ENCODE measurements at regions of chr15 and their contacts with region 1.

Region 1: GRCh38 chr15:101201406-101202174 is 50.3 kb downstream of the CHSY1 start:
- DNase-seq: peak; percentile 73
- H3K4me3 Mint-ChIP-seq: peak overlapping the region; percentile 67
- H3K27ac Mint-ChIP-seq: peak overlapping the region; percentile 96
- H3K4me1 Mint-ChIP-seq: peaks cover 82% of the 10 kb centered on the region
- H3K27me3 Mint-ChIP-seq: no peaks in the 10 kb centered on the region

Region 2: GRCh38 chr15:101088788-101089583 is 112.6 kb before region 1 on chr15:
- intact Hi-C with region 1: loop called (anchors 5 kb)
- DNase-seq: peak; percentile 95
- H3K4me3 Mint-ChIP-seq: no peak overlapping the region
- H3K27ac Mint-ChIP-seq: no peak overlapping the region
- H3K4me1 Mint-ChIP-seq: peaks cover 9% of the 10 kb centered on the region
- H3K27me3 Mint-ChIP-seq: peaks cover under 1% of the 10 kb centered on the region

Region 3: GRCh38 chr15:101159096-101159935 is 42.3 kb before region 1 on chr15:
- intact Hi-C with region 1: loop called (anchors 1 kb)
- DNase-seq: peak; percentile 80
- H3K4me3 Mint-ChIP-seq: peak overlapping the region; percentile 64
- H3K27ac Mint-ChIP-seq: peak overlapping the region; percentile 90
- H3K4me1 Mint-ChIP-seq: peaks cover 35% of the 10 kb centered on the region
- H3K27me3 Mint-ChIP-seq: no peaks in the 10 kb centered on the region

Region 4: DNA sequence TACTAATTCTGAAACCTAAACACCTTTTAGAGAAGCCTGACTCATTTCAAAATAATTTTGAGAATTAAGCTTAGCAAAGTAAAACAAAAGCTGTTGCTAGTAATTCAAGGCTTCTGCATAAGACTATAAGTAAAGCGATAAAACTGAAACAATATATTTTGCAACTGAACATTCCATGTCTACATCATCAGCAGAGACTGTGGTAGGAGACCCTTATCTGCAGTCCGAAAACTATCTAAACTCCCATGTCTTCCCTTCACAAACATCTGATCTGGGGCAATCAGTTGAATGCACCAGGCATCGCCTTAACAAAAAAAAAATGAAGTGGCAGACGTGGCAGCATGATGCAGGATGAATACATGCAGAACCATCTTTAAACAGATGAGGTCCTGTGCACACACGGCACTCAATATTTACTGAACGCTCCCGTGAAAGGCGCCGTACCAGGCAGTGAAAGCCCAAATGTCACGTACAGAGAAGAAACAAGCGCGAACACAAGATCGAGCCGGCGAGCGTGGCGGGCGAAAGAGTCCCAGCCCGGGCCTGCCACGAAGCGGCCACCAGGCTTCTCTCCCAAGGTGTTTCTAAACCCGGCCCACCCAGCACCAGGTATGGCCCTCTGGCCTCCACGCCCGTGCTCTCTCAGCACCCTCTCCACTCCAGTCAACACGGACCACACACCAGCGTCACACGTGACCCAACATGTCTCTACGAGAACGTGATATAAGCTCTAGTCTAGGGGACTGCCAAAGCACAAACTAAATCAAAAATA is 12.8 kb before region 1 on chr15:
- intact Hi-C with region 1: loop called (anchors 1 kb)
- DNase-seq: no peak
- H3K4me3 Mint-ChIP-seq: peak overlapping the region; percentile 67
- H3K27ac Mint-ChIP-seq: peak overlapping the region; percentile 91
- H3K4me1 Mint-ChIP-seq: peaks cover 79% of the 10 kb centered on the region
- H3K27me3 Mint-ChIP-seq: no peaks in the 10 kb centered on the region

Region 5: DNA sequence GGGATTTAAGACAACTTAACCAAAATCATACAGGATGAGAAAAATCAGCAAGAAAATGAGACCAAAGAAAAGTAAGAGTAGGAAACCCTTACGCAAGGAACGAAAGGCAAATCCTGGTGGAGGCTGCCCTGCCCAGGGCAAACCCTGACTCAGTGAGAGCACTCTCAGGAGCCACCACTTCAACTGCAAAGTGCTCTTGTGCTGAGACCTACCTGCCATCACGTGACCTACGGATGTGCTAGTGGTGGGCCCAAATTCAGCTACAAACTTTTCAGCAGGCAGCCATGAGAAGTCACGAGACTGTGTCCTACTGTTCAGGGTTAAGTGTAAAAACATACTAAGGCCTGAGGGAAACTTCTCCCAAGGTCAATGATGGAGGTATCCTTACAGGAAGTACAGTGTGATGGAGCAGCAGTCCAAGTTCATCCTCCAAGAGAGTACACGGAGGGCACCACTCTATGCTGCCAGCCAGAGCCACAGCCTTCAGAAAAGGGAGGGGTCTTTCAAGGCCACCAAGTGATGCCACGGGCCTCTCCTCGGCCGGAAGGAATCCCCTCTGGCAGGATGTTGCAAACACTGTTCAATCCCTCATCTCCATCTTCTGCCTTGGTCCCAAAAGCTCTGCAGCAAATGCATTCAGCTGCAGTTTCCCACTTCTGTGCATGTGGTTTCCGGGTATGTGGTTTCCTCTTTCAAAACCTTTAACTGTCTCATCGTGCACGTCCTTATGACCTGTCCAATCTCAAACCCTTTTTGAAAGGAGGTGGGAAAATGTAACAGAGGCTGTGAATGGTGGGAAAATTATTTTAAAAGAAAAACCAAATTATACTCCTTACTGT is 40.8 kb after region 1 on chr15:
- intact Hi-C with region 1: loop called (anchors 1 kb)
- DNase-seq: peak; percentile 91
- H3K4me3 Mint-ChIP-seq: peak overlapping the region; percentile 70
- H3K27ac Mint-ChIP-seq: peak overlapping the region; percentile 90
- H3K4me1 Mint-ChIP-seq: peaks cover 83% of the 10 kb centered on the region
- H3K27me3 Mint-ChIP-seq: no peaks in the 10 kb centered on the region

Region 6: DNA sequence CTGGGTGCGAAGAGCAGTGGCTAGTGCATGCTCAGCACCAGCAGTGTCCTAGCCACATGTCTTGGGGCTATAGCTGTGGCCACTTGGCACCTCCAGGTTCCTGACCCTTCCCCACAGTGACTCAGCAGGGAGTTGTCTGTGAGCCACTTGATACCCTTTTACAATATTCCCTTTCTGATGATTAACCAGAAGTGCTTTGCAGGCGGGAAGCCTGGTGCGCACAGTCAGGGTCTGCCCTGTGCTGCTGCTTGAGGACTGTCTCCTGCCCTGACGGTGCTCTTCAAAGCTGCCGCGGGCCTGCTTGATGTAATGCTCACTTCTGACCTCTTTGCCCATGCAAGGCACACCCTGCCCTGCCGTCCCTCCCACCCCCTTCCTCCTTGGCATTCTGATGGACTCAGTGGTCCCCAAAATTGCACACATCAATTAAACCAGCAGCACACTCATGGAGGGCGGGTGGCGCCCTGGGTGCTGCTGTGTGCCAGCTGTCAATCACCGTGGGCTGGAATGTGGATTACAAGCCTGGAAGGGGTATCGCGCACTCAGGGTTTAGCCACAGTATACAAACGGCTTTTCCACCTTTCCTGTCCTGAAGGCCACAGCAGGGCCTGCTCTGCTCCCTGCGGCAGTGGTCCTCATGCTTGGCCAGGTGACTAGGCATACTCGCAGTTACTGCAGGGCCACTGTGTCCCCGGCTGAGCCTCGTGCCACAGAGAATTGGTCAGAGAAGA is 328.8 kb after region 1 on chr15:
- intact Hi-C with region 1: no loop called
- DNase-seq: peak; percentile 44
- H3K4me3 Mint-ChIP-seq: no peak overlapping the region
- H3K27ac Mint-ChIP-seq: no peak overlapping the region
- H3K4me1 Mint-ChIP-seq: no peaks in the 10 kb centered on the region
- H3K27me3 Mint-ChIP-seq: no peaks in the 10 kb centered on the region

Measured in activated CD4-positive, alpha-beta T cell treated with anti-CD3 and anti-CD28 coated beads, Interleukin-2, amount 10 ng/mL, durations not matched to agents 24 days and 14 days (primary cell).